ENCODE measurements at regions of chr5 and their contacts with region 1.

Region 1: DNA sequence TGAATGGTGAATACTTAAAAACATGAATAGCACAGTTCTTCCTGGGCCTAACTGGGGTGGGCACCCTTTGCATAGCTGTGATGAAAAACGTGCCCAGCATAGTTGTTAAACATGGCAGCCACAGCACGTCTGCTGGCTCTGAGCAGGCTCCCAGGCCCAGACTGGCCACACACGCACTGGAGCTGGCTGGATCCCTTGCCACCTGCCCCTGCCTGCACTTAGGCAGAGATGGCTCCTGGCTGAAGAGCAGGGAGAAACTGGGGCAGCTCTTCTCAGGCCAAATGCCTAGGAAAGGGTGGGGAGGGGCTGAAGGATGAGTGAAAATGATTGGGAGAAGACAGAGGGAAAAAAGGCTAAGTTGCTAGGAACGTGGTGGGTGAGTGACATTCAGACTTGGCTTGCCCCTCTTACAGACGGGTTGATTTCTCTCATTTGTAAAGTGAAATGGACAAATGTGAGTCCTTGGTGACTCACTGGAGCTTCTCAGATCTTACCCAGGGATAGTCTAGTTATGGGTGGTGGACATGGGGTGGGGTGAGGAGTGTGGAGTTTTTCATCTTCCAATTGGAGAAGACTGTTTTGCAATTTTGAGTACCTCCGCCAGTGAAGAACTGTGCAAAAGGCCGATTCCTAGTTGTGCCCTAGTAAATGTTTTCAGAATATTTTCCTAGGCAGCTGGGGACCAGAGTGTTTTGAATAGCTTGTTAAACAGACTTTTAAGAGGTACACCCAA is 42.4 kb downstream of the TRIO start:
- DNase-seq: no peak
- ATAC-seq: no peak
- H3K4me3 ChIP-seq: no peak overlapping the region
- H3K4me3 Mint-ChIP-seq: peak overlapping the region; percentile 32
- H3K27ac ChIP-seq: no peak overlapping the region
- H3K27ac Mint-ChIP-seq: peak overlapping the region; percentile 47
- H3K4me1 ChIP-seq: peaks cover 25 to 31% of the 10 kb centered on the region in 2 donors
- H3K4me1 Mint-ChIP-seq: peaks cover 86% of the 10 kb centered on the region
- H3K27me3 ChIP-seq: no peaks in the 10 kb centered on the region
- H3K27me3 Mint-ChIP-seq: no peaks in the 10 kb centered on the region
- CTCF ChIP-seq: no peak

Region 2: DNA sequence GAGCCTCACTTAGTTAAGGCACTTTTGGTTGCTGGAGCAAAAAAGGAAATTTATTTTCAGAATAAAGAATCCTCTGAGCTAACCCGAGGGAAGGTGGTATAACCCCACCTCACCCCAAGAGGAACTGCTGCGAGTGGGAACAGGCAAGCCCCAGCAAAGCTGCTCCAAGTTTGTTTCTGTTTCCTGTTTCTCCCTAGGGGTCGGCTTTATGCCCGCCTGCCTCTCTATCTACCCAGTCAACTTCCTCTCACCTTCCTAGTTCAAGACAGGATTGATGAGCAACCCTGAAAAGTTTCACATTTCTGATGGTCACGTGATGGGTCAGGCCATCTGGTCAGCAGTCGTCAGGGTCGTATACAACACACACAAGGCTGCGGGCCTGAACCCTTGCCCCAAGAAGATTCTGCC is 11.3 kb before region 1 on chr5:
- CTCF ChIA-PET with region 1: interaction called, 4 read pairs
- POLR2A ChIA-PET with region 1: no interaction called
- intact Hi-C with region 1: loop called (anchors 1 kb)
- DNase-seq: peak; percentile 62
- ATAC-seq: peak; percentile 59
- H3K4me3 ChIP-seq: peak overlapping the region in 4 of 5 experiments; percentile 10 to 58 (median 33)
- H3K4me3 Mint-ChIP-seq: peak overlapping the region; percentile 75
- H3K27ac ChIP-seq: peak overlapping the region; percentile 34 to 65
- H3K27ac Mint-ChIP-seq: peak overlapping the region; percentile 82
- H3K4me1 ChIP-seq: peaks cover 54 to 56% of the 10 kb centered on the region in 2 donors
- H3K4me1 Mint-ChIP-seq: peaks cover 72% of the 10 kb centered on the region
- H3K27me3 ChIP-seq: no peaks in the 10 kb centered on the region
- H3K27me3 Mint-ChIP-seq: no peaks in the 10 kb centered on the region
- CTCF ChIP-seq: no peak